ENCODE measurements at regions of chr12 and their contacts with region 1.

Region 1: GRCh38 chr12:31659087-31659933 is at the start of gene ETFBKMT:
- DNase-seq: peak; percentile 95

Region 2: GRCh38 chr12:31959161-31959700 is 299.9 kb after region 1 on chr12 and contains the start of gene RESF1:
- in situ Hi-C with region 1: loop called (anchors 25 kb)
- DNase-seq: peak; percentile 93

Region 3: GRCh38 chr12:32226768-32227167 is 567.5 kb after region 1 on chr12:
- in situ Hi-C with region 1: no loop called
- DNase-seq: no peak

Region 4: GRCh38 chr12:32302218-32303173 is 643.2 kb after region 1 on chr12:
- in situ Hi-C with region 1: loop called (anchors 25 kb)
- DNase-seq: peak; percentile 79

Measured in ACHN (cell line).